ENCODE measurements at regions of chr13 and their contacts with region 1.

Region 1: DNA sequence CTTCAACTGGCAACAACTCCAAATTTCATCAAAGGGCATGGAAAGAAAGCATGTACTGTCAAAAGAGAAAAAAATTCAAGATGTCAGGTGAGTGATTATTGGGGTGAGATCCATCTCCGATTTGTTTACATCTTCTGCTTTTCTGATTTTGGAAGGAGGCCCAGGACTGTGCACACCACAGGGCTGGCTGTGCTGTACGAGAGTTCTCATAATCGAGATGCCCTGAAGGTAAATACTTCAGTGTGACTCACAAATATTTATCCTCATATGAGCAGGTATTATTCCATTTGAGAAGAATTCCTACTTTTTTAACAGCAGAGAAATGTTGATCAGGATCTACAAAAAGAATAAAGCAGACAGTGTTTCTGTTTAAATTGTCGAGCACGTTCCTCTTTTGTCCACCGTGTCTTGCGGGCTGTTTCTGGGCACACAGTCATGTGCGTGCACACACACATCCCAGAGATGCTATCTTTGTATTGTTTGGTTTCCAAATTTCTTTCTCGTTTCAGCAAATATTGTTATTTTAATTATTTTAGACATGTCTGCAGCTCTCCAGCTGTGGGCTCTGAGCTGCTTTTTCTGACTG is 103.7 kb downstream of the KL start:
- DNase-seq: peak; percentile 96
- ATAC-seq: peak; percentile 91
- H3K4me3 ChIP-seq: peak overlapping the region; percentile 42; the same call in 1 of the 2 replicates
- H3K27ac ChIP-seq: peak overlapping the region; percentile 79
- H3K4me1 ChIP-seq: peaks cover 38% of the 10 kb centered on the region
- H3K27me3 ChIP-seq: no peaks in the 10 kb centered on the region
- CTCF ChIP-seq: no peak

Region 2: GRCh38 chr13:33218001-33218400 is 98.0 kb after region 1 on chr13:
- CTCF ChIA-PET with region 1: no interaction called
- POLR2A ChIA-PET with region 1: no interaction called
- intact Hi-C with region 1: loop called (anchors 5 kb)
- DNase-seq: peak; percentile 88
- ATAC-seq: peak; percentile 83
- H3K4me3 ChIP-seq: peak overlapping the region; percentile 23; the same call in 1 of the 2 replicates
- H3K27ac ChIP-seq: peak overlapping the region; percentile 90
- H3K4me1 ChIP-seq: peaks cover 28% of the 10 kb centered on the region
- H3K27me3 ChIP-seq: no peaks in the 10 kb centered on the region
- CTCF ChIP-seq: no peak

Region 3: DNA sequence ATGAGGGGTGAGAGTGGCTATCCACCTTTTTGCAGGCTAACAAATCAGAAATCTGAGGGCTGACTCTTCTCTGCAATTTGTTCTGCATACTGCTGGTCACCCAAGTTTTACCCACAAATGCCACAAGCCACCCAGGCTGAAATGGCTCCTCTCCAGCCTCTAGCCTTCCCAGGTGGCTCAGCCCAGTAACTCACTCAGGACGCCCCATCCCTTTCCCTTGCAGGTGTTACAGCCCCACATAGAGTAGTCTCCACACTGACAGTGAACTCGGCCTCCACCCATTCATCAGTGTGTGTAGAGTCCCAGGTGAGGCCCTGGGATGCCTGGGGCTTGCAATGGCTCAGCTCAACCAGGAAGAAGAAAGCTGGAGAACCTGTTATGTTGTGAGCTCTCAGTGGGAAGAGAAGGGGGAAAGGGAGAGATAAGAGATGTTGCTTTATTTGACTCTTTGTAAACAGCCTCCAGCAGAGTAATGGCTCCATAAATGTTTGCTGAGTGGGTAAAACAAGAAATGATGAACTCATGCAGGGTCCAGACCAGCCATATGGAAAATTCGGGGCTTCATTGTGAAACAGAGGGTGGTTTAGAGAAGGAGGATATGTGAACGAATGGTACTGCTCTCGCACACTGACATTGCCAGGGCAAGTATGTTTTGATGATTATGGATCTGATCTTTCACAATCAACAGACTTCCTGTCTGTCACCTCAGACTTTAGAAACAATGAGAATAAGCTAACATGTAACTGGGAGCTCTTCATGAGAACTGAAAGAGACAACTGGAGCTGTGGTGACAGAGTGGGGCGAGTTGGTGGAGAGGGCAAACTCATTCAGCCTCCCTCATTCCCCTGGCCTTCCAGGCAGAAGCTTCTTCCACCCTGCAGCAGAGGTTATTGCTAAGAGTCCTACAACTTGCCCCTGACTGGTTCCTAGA is 623.7 kb after region 1 on chr13:
- CTCF ChIA-PET with region 1: no interaction called
- POLR2A ChIA-PET with region 1: no interaction called
- intact Hi-C with region 1: no loop called
- DNase-seq: no peak
- ATAC-seq: no peak
- H3K4me3 ChIP-seq: no peak overlapping the region
- H3K27ac ChIP-seq: no peak overlapping the region
- H3K4me1 ChIP-seq: peaks cover 9% of the 10 kb centered on the region; the same call in 1 of the 2 replicates
- H3K27me3 ChIP-seq: no peaks in the 10 kb centered on the region
- CTCF ChIP-seq: no peak

Measured in PC-3 (cell line).